ENCODE measurements at regions of chr17 and their contacts with region 1.

Region 1: DNA sequence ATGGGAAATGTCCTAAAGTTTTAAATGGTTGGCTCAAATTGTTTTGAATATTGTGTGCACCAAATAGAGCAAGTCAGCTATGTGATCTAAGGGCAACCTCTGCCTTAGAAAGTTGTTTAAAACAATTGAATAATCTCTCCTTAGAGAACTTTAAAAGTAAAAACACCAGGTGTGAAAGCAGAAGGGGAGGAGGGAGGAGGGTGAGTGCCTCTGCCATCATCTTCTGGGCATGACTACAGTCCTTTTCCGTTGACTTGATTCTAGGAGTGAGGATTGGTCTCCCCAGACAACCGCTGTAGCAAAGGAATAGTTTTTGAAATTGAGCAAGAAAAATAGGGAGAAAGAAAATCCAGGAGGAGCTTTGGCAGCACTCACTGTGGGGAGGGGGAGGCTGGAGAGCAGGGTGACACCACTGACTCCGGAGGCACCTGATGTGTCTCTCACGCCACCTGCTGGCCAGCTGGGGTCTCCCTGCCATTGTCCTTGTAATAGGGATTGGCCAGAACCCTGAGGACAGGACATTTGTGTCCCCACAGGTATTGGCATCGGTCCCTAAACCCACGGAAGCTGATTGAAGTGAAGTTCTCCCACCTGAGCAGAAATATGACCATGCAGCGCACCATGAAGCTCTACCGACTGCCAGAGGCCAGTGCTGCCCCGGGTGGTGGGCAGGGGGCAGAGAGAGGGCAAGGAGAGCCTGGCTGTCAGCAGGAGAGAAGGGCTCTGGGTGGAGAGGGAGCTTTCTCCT is 33.3 kb downstream of the PLCD3 start:
- DNase-seq: peak; percentile 38 to 77 (median 66)
- ATAC-seq: peak; percentile 89
- H3K4me3 ChIP-seq: no peak overlapping the region
- H3K4me3 Mint-ChIP-seq: no peak overlapping the region
- H3K27ac ChIP-seq: no peak overlapping the region
- H3K27ac Mint-ChIP-seq: peak overlapping the region in 6 of 9 donors; percentile 4 to 87 (median 62)
- H3K4me1 ChIP-seq: no peaks in the 10 kb centered on the region
- H3K4me1 Mint-ChIP-seq: peaks cover 0 to 6% (median 0%) of the 10 kb centered on the region in 7 donors
- H3K27me3 ChIP-seq: no peaks in the 10 kb centered on the region
- H3K27me3 Mint-ChIP-seq: no peaks in the 10 kb centered on the region

Region 2: DNA sequence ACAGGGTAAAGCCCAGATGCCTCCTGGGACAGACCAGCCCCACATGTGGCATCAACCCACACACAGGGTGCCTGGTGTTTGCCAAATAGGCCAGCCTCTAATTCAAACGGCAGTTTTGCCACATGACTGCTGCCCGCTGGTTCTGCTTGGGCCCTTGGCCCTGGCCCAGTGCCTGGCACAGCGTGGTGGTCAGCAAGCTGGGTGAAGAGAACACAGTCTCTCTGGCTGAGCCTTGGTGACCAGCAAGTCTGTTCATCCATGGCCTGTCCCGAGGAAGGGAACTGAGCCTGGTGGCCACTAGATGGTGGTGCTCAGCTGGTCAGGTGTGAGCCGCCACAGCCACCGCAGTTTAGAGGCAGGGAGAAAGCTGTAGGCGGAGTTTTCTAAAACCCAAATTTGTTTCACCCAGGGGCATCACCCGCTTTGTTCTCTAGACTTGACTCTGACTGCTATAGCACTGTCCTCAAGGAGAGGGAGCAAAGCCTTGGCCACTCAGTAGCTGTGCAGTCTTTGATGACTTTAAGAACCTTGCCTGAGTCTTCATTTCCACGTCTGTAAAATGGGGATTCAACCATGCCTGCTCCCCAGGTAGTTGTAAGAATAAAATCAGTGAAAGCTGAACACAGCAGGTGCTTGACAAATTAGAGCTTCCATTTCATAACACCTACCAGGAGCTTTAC is 179.0 kb before region 1 on chr17:
- CTCF ChIA-PET with region 1: interaction called, 12 read pairs
- POLR2A ChIA-PET with region 1: no interaction called
- intact Hi-C with region 1: loop called in 1 of 2 experiments (anchors 1 kb)
- DNase-seq: peak in 8 of 9 donors; percentile 20 to 65 (median 50)
- ATAC-seq: peak; percentile 92
- H3K4me3 ChIP-seq: no peak overlapping the region
- H3K4me3 Mint-ChIP-seq: no peak overlapping the region
- H3K27ac ChIP-seq: no peak overlapping the region
- H3K27ac Mint-ChIP-seq: no peak overlapping the region
- H3K4me1 ChIP-seq: no peaks in the 10 kb centered on the region
- H3K4me1 Mint-ChIP-seq: no peaks in the 10 kb centered on the region
- H3K27me3 ChIP-seq: no peaks in the 10 kb centered on the region
- H3K27me3 Mint-ChIP-seq: peaks cover 0 to 44% (median 19%) of the 10 kb centered on the region in 5 donors